Activated CD4-positive, alpha-beta T cell treated with anti-CD3 and anti-CD28 coated beads for 36 hours (primary cell): ENCODE measurements at regions of chr17 and their contacts with region 1.

Region 1: GRCh38 chr17:57868007-57868909 is 18.4 kb upstream of the MRPS23 start:
- DNase-seq: peak; percentile 58
- ATAC-seq: peak; percentile 89
- H3K4me3 Mint-ChIP-seq: no peak overlapping the region
- H3K27ac Mint-ChIP-seq: peak overlapping the region; percentile 10
- H3K4me1 Mint-ChIP-seq: peaks cover 11% of the 10 kb centered on the region
- H3K27me3 Mint-ChIP-seq: peaks cover 9% of the 10 kb centered on the region

Region 2: DNA sequence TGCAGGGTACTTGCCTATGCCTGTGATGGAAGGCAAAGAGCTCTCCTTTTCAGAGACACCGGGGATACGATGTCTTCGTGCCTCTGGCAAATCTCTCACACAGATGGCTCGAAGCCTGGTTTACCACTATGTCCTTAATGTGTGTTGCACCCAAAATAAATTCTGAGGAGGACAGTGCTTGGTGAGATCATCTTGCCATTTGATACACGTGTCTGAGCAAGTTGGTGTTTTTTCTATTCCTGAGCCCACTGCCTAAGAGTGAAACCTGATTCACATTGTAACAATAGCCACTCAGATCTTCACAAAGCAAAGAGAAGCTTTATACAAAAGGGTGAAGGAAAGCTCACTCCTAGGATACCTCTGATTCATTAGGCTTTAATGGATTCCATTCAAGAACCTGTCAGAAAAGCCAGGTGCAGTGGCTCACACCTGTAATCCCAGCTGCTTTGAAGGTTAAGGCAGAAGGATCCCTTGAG is 816.3 kb before region 1 on chr17:
- CTCF ChIA-PET with region 1: no interaction called
- POLR2A ChIA-PET with region 1: no interaction called
- intact Hi-C with region 1: no loop called
- DNase-seq: no peak
- ATAC-seq: no peak
- H3K4me3 Mint-ChIP-seq: no peak overlapping the region
- H3K27ac Mint-ChIP-seq: no peak overlapping the region
- H3K4me1 Mint-ChIP-seq: peaks cover 6% of the 10 kb centered on the region
- H3K27me3 Mint-ChIP-seq: peaks cover 9% of the 10 kb centered on the region

Region 3: GRCh38 chr17:57855391-57856035 is 12.7 kb before region 1 on chr17:
- CTCF ChIA-PET with region 1: interaction called, 33 read pairs
- POLR2A ChIA-PET with region 1: no interaction called
- intact Hi-C with region 1: no loop called
- DNase-seq: no peak
- ATAC-seq: no peak
- H3K4me3 Mint-ChIP-seq: no peak overlapping the region
- H3K27ac Mint-ChIP-seq: no peak overlapping the region
- H3K4me1 Mint-ChIP-seq: peaks cover 13% of the 10 kb centered on the region
- H3K27me3 Mint-ChIP-seq: peaks cover 2% of the 10 kb centered on the region

Region 4: GRCh38 chr17:58181796-58182195 is 313.5 kb after region 1 on chr17:
- CTCF ChIA-PET with region 1: no interaction called
- POLR2A ChIA-PET with region 1: no interaction called
- intact Hi-C with region 1: no loop called
- DNase-seq: no peak
- ATAC-seq: no peak
- H3K4me3 Mint-ChIP-seq: no peak overlapping the region
- H3K27ac Mint-ChIP-seq: no peak overlapping the region
- H3K4me1 Mint-ChIP-seq: no peaks in the 10 kb centered on the region
- H3K27me3 Mint-ChIP-seq: no peaks in the 10 kb centered on the region